PC-9 (cell line): ENCODE measurements at regions of chr15 and their contacts with region 1.

Region 1: DNA sequence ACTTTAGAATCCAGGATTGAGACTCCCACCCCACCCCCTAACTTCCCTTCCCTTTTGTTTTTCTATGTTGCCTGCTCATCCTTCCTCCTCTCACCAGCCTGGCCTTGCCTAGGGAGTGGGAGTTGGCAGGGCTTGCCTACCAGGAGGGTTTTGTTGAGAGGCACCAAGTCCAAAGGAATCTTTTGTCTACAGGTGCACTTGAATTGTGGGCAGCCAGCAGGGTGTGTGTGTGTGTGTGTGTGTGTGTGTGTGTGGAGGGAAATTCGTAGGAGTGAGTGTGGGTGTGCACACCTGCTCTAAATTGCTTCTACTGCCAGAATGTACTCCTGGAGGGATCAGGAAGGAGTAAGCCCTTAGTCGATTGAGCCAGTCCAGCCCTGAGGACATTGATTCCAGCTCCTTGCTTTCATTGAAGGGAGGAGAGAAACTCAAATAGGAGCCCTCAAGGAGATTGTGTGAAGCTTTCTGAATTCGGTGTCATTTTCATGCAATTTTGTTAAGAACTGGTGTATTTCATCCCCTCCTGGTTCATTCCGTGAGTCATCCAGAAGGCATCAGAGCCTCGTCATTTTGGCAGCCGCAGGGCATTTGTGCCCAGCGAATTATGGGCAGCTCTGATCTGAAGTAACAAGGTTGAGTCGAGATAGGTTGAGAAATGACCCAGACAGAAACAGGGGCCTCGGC is 112.1 kb downstream of the SLCO3A1 start:
- DNase-seq: peak; percentile 89 to 98
- H3K4me3 ChIP-seq: peak overlapping the region; percentile 24; the same call in 1 of the 2 replicates
- H3K27ac ChIP-seq: peak overlapping the region; percentile 98
- H3K4me1 ChIP-seq: peaks cover 50% of the 10 kb centered on the region
- H3K27me3 ChIP-seq: no peaks in the 10 kb centered on the region
- CTCF ChIP-seq: no peak

Region 2: DNA sequence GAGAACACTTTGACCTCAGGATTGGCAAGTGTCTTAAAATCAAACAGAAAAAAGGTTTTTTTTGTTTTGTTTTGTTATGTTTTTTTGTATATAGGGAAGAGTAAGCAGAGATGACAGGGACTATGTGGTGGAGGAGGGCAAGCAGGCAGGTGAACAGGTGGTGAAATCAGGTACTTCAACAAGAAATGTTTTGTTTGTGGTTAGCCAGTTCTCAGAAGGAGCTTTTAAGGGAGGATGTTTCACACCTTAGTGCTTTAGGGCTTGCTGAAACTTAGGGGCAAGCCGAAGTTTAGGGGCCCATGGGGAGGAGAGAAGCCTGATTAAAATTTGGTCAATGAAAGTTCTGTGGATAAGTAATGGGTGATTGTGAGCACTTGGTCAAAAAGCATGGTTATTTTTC is 482.8 kb before region 1 on chr15:
- CTCF ChIA-PET with region 1: no interaction called
- POLR2A ChIA-PET with region 1: interaction called, 22 read pairs
- intact Hi-C with region 1: no loop called
- DNase-seq: no peak
- H3K4me3 ChIP-seq: no peak overlapping the region
- H3K27ac ChIP-seq: no peak overlapping the region
- H3K4me1 ChIP-seq: 0 out of 2 replicates have a peak, but pooled peaks cover 5% of the 10 kb centered on the region
- H3K27me3 ChIP-seq: no peaks in the 10 kb centered on the region
- CTCF ChIP-seq: no peak

Region 3: DNA sequence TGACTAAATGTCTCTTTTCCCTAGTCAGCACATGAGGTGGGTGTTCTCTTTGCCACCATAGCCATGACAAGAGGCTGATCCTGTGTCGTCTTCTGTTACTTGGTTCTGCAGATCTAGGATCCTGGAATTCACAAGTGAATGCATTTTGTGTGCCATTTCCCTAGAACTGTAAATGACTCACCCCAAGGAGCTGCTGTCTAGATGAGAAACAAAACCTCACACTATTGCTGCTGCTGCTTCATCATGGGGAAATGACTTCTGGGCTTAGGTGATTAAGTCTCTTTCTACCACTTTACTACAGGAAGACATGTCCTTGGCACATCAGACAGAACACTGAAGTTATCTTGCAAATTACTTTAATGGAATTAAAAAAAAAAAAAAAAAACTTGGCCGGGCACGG is 57.3 kb before region 1 on chr15:
- CTCF ChIA-PET with region 1: no interaction called
- POLR2A ChIA-PET with region 1: no interaction called
- intact Hi-C with region 1: no loop called
- DNase-seq: no peak
- H3K4me3 ChIP-seq: no peak overlapping the region
- H3K27ac ChIP-seq: no peak overlapping the region
- H3K4me1 ChIP-seq: no peaks in the 10 kb centered on the region
- H3K27me3 ChIP-seq: no peaks in the 10 kb centered on the region
- CTCF ChIP-seq: no peak

Region 4: DNA sequence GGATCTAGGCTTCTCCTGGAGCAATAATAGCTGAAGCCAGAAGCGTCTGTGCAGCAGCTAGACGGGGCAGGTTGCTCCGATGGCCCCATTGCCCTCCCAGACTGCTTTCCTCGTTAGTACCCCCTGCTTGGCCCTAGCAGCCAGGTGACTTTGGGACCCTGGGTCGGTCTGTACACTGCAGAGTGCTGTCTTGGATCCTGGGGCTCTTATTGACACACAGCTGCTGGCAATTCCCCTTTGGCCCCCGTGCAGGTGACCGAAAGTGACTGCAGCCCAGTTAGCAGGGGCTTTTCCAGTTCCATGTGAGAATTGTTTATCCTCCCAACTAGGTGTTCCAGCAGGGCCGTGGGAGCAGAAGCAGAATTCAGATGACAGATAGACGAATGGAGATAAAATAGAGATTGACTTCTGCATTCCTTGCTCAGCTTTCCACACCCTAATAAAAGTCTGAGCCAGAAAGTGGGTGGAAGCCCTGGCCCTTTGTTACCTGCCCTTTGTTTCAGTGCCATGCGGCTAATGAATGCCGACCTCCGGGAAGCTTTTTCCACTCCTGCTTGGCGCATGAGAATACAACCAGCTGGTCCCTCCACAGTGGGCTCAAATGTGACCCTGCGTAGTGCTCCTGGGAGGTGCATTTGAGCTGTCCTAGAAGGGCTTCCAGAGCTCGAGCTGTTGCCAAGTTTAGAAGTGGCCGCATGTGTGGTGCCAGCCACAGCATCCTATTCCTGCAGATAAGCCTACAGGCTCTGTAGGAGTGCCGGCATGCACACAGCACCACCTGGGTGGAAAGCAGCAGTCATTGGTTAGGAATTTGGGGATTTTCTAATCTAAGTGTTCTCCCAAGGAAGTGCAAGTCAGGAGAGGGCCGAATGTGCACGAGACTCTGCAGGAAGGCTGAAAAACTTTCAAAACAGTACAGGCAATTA is 17.7 kb before region 1 on chr15:
- CTCF ChIA-PET with region 1: no interaction called
- POLR2A ChIA-PET with region 1: no interaction called
- intact Hi-C with region 1: loop called (anchors 1 kb)
- DNase-seq: peak; percentile 69 to 93
- H3K4me3 ChIP-seq: peak overlapping the region; percentile 39; the same call in 1 of the 2 replicates
- H3K27ac ChIP-seq: peak overlapping the region; percentile 100
- H3K4me1 ChIP-seq: peaks cover 94% of the 10 kb centered on the region
- H3K27me3 ChIP-seq: no peaks in the 10 kb centered on the region
- CTCF ChIP-seq: no peak

Region 5: GRCh38 chr15:92011611-92012367 is 46.1 kb after region 1 on chr15:
- CTCF ChIA-PET with region 1: interaction called, 3 read pairs
- POLR2A ChIA-PET with region 1: interaction called, 12 read pairs
- intact Hi-C with region 1: no loop called
- DNase-seq: peak; percentile 37 to 59
- H3K4me3 ChIP-seq: no peak overlapping the region
- H3K27ac ChIP-seq: peak overlapping the region; percentile 25
- H3K4me1 ChIP-seq: peaks cover 9% of the 10 kb centered on the region; the same call in 1 of the 2 replicates
- H3K27me3 ChIP-seq: no peaks in the 10 kb centered on the region
- CTCF ChIP-seq: no peak